Breast epithelium (tissue), 4 donors: ENCODE measurements at regions of chr20 and their contacts with region 1.

Region 1: GRCh38 chr20:22106308-22106938 is 401.0 kb downstream of the PAX1 start:
- DNase-seq: no peak
- H3K4me3 ChIP-seq: no peak overlapping the region
- H3K27ac ChIP-seq: no peak overlapping the region
- H3K4me1 ChIP-seq: no peaks in the 10 kb centered on the region
- H3K27me3 ChIP-seq: no peaks in the 10 kb centered on the region
- CTCF ChIP-seq: peak in 1 of 3 donors; percentile 49
- POLR2A ChIP-seq: no peak

Region 2: GRCh38 chr20:21498635-21499034 is 607.8 kb before region 1 on chr20:
- intact Hi-C with region 1: loop called (anchors 5 kb)
- DNase-seq: no peak
- H3K4me3 ChIP-seq: no peak overlapping the region
- H3K27ac ChIP-seq: no peak overlapping the region
- H3K4me1 ChIP-seq: no peaks in the 10 kb centered on the region
- H3K27me3 ChIP-seq: peaks cover 0 to 41% of the 10 kb centered on the region in 2 donors
- CTCF ChIP-seq: no peak
- POLR2A ChIP-seq: no peak